PC-9 (cell line): ENCODE measurements at regions of chr18 and their contacts with region 1.

Region 1: GRCh38 chr18:35513181-35513936 is 15.6 kb upstream of the INO80C start:
- DNase-seq: peak; percentile 86 to 91
- H3K4me3 ChIP-seq: no peak overlapping the region
- H3K27ac ChIP-seq: peak overlapping the region; percentile 83
- H3K4me1 ChIP-seq: peaks cover 71% of the 10 kb centered on the region
- H3K27me3 ChIP-seq: no peaks in the 10 kb centered on the region
- CTCF ChIP-seq: no peak

Region 2: GRCh38 chr18:35343936-35344735 is 169.2 kb before region 1 on chr18 and contains the start of gene ZNF24:
- CTCF ChIA-PET with region 1: no interaction called
- POLR2A ChIA-PET with region 1: no interaction called
- intact Hi-C with region 1: no loop called
- DNase-seq: peak; percentile 75 to 88
- H3K4me3 ChIP-seq: peak within 1 kb of the TSS; percentile 88
- H3K27ac ChIP-seq: peak within 1 kb of the TSS; percentile 72
- H3K4me1 ChIP-seq: 0 out of 2 replicates have a peak, but pooled peaks cover 4% of the 10 kb centered on the region
- H3K27me3 ChIP-seq: no peaks in the 10 kb centered on the region
- CTCF ChIP-seq: no peak
- total RNA-seq, gene ZNF24: 20.9 and 33.9 TPM in 2 replicates

Region 3: GRCh38 chr18:35407871-35408481 is 105.4 kb before region 1 on chr18:
- CTCF ChIA-PET with region 1: no interaction called
- POLR2A ChIA-PET with region 1: interaction called, 3 read pairs
- intact Hi-C with region 1: loop called (anchors 5 kb)
- DNase-seq: peak in 1 of 2 experiments; percentile 17
- H3K4me3 ChIP-seq: no peak overlapping the region
- H3K27ac ChIP-seq: no peak overlapping the region
- H3K4me1 ChIP-seq: peaks cover 53% of the 10 kb centered on the region
- H3K27me3 ChIP-seq: no peaks in the 10 kb centered on the region
- CTCF ChIP-seq: peak; percentile 78

Region 4: GRCh38 chr18:35459005-35459441 is 54.3 kb before region 1 on chr18:
- CTCF ChIA-PET with region 1: no interaction called
- POLR2A ChIA-PET with region 1: no interaction called
- intact Hi-C with region 1: loop called (anchors 5 kb)
- DNase-seq: peak; percentile 86 to 91
- H3K4me3 ChIP-seq: no peak overlapping the region
- H3K27ac ChIP-seq: peak overlapping the region; percentile 92
- H3K4me1 ChIP-seq: peaks cover 80% of the 10 kb centered on the region
- H3K27me3 ChIP-seq: no peaks in the 10 kb centered on the region
- CTCF ChIP-seq: no peak

Region 5: GRCh38 chr18:35478520-35479435 is 34.6 kb before region 1 on chr18:
- CTCF ChIA-PET with region 1: no interaction called
- POLR2A ChIA-PET with region 1: interaction called, 13 read pairs
- intact Hi-C with region 1: loop called (anchors 5 kb)
- DNase-seq: peak; percentile 43 to 93
- H3K4me3 ChIP-seq: peak overlapping the region; percentile 49
- H3K27ac ChIP-seq: peak overlapping the region; percentile 97
- H3K4me1 ChIP-seq: peaks cover 54% of the 10 kb centered on the region
- H3K27me3 ChIP-seq: no peaks in the 10 kb centered on the region
- CTCF ChIP-seq: no peak

Region 6: DNA sequence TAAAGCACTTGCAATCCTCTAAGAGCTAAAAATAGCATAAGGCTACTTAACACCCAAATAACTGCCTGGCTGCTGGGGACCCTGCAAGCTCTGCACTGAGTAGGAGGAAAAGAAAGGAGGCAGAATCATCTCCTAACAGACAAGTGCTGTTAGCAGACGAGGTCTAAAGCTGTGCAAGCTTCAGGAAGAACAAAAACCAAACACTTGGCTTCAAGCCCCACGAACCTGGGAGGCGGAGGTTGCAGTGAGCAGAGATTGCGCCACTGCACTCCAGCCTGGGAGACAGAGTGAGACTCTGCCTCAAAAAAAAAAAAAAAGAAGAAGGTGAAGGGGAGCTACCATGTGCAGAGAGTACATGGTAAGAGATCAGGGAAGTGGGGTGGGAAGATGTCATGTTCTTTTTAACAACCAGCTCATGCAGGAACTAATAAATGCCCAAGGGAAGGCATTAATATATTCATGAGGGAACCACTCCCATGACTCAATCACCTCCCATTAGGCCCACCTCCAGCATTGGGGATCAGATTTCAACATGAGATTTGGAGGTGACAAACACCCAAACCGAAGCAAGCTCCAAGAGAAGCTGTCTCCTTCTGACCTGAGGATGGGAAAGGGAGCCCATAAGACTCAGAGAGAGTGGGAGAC is 13.2 kb after region 1 on chr18:
- CTCF ChIA-PET with region 1: interaction called, 3 read pairs
- POLR2A ChIA-PET with region 1: interaction called, 13 read pairs
- intact Hi-C with region 1: no loop called
- DNase-seq: peak; percentile 42 to 68
- H3K4me3 ChIP-seq: peak overlapping the region; percentile 19; the same call in 1 of the 2 replicates
- H3K27ac ChIP-seq: no peak overlapping the region
- H3K4me1 ChIP-seq: peaks cover 14% of the 10 kb centered on the region
- H3K27me3 ChIP-seq: no peaks in the 10 kb centered on the region
- CTCF ChIP-seq: no peak

Region 7: DNA sequence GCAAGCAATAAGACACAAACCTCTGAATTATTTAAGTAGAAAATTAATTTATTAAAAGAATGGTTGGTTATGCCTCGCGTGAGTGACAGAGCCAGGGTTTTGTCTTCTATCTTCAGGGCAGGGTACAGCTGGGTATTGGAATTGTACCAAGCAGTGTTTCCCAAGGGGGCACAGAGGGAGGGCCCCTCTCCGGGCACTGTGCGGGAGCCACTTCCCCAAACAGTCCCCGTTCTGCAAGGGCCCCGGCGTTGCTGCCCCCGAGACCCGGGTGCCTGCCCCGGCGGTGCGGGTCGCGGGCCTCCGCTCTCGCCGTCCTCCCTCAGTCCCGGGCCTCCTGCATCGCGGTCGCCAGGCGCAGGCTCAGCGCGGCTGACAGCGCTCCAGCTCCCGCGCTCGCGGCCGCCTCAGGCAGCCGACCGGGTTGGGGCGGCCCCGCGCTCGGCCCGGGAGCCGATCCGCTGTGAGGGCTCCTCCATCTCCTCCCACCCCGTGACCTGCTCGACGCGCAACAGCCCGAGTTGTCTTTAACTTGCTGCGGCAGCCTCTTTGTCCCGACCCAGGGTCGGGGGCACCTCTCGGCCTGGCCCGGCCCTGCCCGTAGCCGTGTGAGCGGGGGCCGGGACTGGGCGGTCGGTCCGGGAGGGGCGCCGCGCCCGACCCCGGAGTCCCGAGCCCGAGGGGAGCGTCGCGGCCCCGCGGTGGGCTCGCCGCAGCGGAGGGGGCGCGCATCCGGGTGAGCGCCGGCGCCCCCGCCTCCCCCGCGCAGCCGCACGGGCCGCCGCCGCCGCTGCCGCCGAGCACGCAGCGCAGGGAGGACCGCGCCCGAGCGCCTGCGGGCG is 67.6 kb after region 1 on chr18:
- CTCF ChIA-PET with region 1: no interaction called
- POLR2A ChIA-PET with region 1: no interaction called
- intact Hi-C with region 1: loop called (anchors 5 kb)
- DNase-seq: peak; percentile 35
- H3K4me3 ChIP-seq: peak overlapping the region; percentile 65
- H3K27ac ChIP-seq: no peak overlapping the region
- H3K4me1 ChIP-seq: peaks cover 20% of the 10 kb centered on the region
- H3K27me3 ChIP-seq: no peaks in the 10 kb centered on the region
- CTCF ChIP-seq: no peak

Region 8: GRCh38 chr18:35616664-35617423 is 103.5 kb after region 1 on chr18:
- CTCF ChIA-PET with region 1: no interaction called
- POLR2A ChIA-PET with region 1: no interaction called
- intact Hi-C with region 1: loop called (anchors 1 kb)
- DNase-seq: peak; percentile 48 to 66
- H3K4me3 ChIP-seq: no peak overlapping the region
- H3K27ac ChIP-seq: peak overlapping the region; percentile 48
- H3K4me1 ChIP-seq: 0 out of 2 replicates have a peak, but pooled peaks cover 10% of the 10 kb centered on the region
- H3K27me3 ChIP-seq: no peaks in the 10 kb centered on the region
- CTCF ChIP-seq: no peak